Panc1 (cell line): ENCODE measurements at regions of chr1 and their contacts with region 1.

Region 1: DNA sequence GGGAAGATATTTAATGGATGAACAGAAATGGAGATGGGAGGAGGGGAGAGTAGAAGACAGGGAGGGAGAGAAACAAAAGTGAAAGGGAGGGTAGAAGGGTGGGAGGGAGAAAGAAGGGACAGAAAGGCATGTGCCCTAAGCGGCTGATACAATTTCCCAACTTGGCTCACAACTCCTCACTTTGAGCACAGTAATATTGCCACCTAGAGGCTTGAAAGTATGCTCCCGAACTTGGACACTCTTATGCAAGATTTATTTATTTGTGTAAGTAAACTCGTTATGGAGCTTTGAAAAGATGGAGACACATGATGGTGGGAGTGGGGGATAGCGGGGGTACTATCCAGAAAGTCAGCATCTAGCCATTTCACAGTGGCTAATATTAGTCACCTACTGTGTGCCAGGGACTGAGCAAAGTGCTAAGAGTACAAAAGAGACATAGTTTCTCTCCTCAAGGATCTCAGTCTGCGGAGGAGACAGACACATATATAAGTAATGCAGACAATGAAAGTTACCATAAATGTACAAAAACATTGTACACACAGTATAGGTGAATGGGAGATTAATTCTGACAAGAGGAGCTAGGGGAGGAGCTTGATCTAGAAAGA is 189.7 kb downstream of the SEC16B start:
- DNase-seq: peak; percentile 20
- ATAC-seq: peak; percentile 83
- H3K4me3 ChIP-seq: no peak overlapping the region
- H3K27ac ChIP-seq: no peak overlapping the region
- H3K4me1 ChIP-seq: no peaks in the 10 kb centered on the region
- H3K27me3 ChIP-seq: 0 out of 2 replicates have a peak, but pooled peaks cover 4% of the 10 kb centered on the region
- CTCF ChIP-seq: peak; percentile 71

Region 2: GRCh38 chr1:177181631-177182291 is 598.4 kb before region 1 on chr1:
- CTCF ChIA-PET with region 1: no interaction called
- POLR2A ChIA-PET with region 1: no interaction called
- in situ Hi-C with region 1: no loop called
- intact Hi-C with region 1: loop called (anchors 10 kb)
- DNase-seq: peak; percentile 50
- ATAC-seq: peak; percentile 96
- H3K4me3 ChIP-seq: peak overlapping the region in 1 of 2 experiments; percentile 38; a peak in 2 of 4 replicates
- H3K27ac ChIP-seq: no peak overlapping the region
- H3K4me1 ChIP-seq: no peaks in the 10 kb centered on the region
- H3K27me3 ChIP-seq: peaks cover 18% of the 10 kb centered on the region
- CTCF ChIP-seq: peak; percentile 90

Region 3: DNA sequence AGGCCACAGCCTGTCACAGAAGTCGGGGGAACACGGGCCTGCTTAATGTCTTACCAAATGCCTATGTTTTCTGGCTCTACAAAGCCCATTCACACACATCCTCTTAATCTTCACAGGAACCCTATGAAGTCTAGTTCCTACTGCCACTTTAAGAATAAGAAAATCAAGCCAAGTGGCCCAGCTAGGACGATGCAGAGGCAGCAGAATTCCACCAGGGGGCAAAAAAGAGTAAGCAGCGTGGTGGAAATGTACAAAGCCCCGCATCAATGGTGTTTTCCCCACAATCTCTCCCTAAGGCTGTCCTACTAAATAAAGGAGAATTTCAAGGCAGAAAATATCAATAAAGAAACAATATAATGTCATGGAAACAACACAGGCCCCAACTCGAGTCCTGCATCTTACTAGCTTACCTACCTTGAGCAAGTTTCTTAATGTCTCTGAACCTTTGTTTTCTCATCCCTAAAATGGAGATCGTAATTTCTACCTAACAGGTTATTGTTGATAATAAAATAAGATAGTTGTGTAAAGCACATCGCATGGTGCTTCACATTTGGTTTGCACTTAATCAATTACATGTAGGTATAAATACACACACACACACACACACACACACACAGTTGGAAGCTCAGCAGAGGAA is 168.3 kb after region 1 on chr1:
- CTCF ChIA-PET with region 1: interaction called, 3 read pairs
- POLR2A ChIA-PET with region 1: no interaction called
- in situ Hi-C with region 1: no loop called
- intact Hi-C with region 1: loop called (anchors 5 kb)
- DNase-seq: peak; percentile 62
- ATAC-seq: peak; percentile 78
- H3K4me3 ChIP-seq: no peak overlapping the region
- H3K27ac ChIP-seq: no peak overlapping the region
- H3K4me1 ChIP-seq: no peaks in the 10 kb centered on the region
- H3K27me3 ChIP-seq: no peaks in the 10 kb centered on the region
- CTCF ChIP-seq: peak; percentile 95